Calu3 (cell line): ENCODE measurements at regions of chr9 and their contacts with region 1.

Region 1: DNA sequence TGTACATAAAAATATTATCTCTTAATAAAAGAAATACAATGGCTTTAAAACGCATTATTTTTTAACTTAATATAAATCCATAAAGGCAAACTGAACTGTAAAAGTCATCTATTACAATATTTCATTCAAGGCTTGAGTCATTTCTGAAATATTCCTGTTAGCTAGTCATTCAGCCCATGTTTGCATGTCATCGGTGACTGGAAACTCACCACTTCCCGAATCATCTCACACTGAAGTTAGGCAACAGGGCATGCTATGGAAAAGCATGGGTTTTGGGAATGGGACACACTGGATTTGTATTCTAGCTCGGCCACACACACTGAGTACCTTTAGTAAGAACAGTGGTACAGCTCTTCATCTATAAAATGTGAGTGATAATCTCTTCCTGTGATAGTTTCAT is 691.1 kb upstream of the C9orf72 start:
- DNase-seq: no peak
- H3K4me3 Mint-ChIP-seq: no peak overlapping the region
- H3K27ac Mint-ChIP-seq: no peak overlapping the region
- H3K4me1 Mint-ChIP-seq: no peaks in the 10 kb centered on the region
- H3K27me3 Mint-ChIP-seq: no peaks in the 10 kb centered on the region
- CTCF ChIP-seq: no peak

Region 2: GRCh38 chr9:28320616-28321015 is 56.2 kb after region 1 on chr9:
- CTCF ChIA-PET with region 1: no interaction called
- intact Hi-C with region 1: loop called (anchors 10 kb)
- DNase-seq: no peak
- H3K4me3 Mint-ChIP-seq: no peak overlapping the region
- H3K27ac Mint-ChIP-seq: no peak overlapping the region
- H3K4me1 Mint-ChIP-seq: no peaks in the 10 kb centered on the region
- H3K27me3 Mint-ChIP-seq: no peaks in the 10 kb centered on the region
- CTCF ChIP-seq: no peak